B cell (primary cell): ENCODE measurements at regions of chr6 and their contacts with region 1.

Region 1: GRCh38 chr6:32952817-32953739 is at the start of gene HLA-DMA:
- DNase-seq: peak; percentile 97
- ATAC-seq: peak; percentile 91
- H3K4me3 ChIP-seq: peak within 1 kb of the TSS; percentile 72 to 98 (median 93)
- H3K4me3 Mint-ChIP-seq: peak within 1 kb of the TSS; percentile 96
- H3K27ac ChIP-seq: peak within 1 kb of the TSS; percentile 91 to 92
- H3K27ac Mint-ChIP-seq: peak within 1 kb of the TSS; percentile 98
- H3K4me1 ChIP-seq: peaks cover 70 to 84% of the 10 kb centered on the region in 2 donors
- H3K4me1 Mint-ChIP-seq: peaks cover 85% of the 10 kb centered on the region
- H3K27me3 ChIP-seq: no peaks in the 10 kb centered on the region
- H3K27me3 Mint-ChIP-seq: no peaks in the 10 kb centered on the region
- CTCF ChIP-seq: peak; percentile 88
- total RNA-seq, gene HLA-DMA: 554 and 558 TPM in 2 replicates

Region 2: GRCh38 chr6:32692019-32692418 is 261.1 kb before region 1 on chr6:
- CTCF ChIA-PET with region 1: no interaction called
- POLR2A ChIA-PET with region 1: no interaction called
- intact Hi-C with region 1: no loop called
- DNase-seq: peak; percentile 85
- ATAC-seq: peak; percentile 60
- H3K4me3 ChIP-seq: no peak overlapping the region
- H3K4me3 Mint-ChIP-seq: peak overlapping the region; percentile 53
- H3K27ac ChIP-seq: peak overlapping the region; percentile 68 to 95
- H3K27ac Mint-ChIP-seq: peak overlapping the region; percentile 85
- H3K4me1 ChIP-seq: peaks cover 27 to 28% of the 10 kb centered on the region in 2 donors
- H3K4me1 Mint-ChIP-seq: peaks cover 33% of the 10 kb centered on the region
- H3K27me3 ChIP-seq: no peaks in the 10 kb centered on the region
- H3K27me3 Mint-ChIP-seq: no peaks in the 10 kb centered on the region
- CTCF ChIP-seq: peak; percentile 42

Region 3: DNA sequence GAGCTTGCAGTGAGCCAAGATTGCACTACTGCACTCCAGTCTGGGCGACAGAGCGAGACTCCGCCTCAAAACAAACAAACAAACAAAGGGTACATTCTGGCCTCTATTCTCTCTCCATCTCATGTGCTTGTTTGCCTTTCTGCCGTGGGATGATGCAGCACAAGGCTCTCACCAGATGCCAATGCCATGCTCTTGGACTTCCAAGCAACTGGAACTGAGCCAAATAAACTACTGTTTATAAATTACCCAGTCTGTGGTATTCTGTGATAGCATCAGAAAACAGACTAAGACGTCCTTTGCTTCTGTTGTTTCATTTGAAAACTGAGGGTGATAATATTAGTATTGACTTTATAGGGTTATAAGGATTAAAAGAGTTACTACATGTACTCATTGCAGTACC is 11.7 kb after region 1 on chr6:
- CTCF ChIA-PET with region 1: interaction called, 822 read pairs
- POLR2A ChIA-PET with region 1: interaction called, 349 read pairs
- intact Hi-C with region 1: loop called (anchors 1 kb)
- DNase-seq: no peak
- ATAC-seq: no peak
- H3K4me3 ChIP-seq: no peak overlapping the region
- H3K4me3 Mint-ChIP-seq: no peak overlapping the region
- H3K27ac ChIP-seq: no peak overlapping the region
- H3K27ac Mint-ChIP-seq: peak overlapping the region; percentile 68
- H3K4me1 ChIP-seq: peaks cover 26 to 28% of the 10 kb centered on the region in 2 donors
- H3K4me1 Mint-ChIP-seq: peaks cover 50% of the 10 kb centered on the region
- H3K27me3 ChIP-seq: no peaks in the 10 kb centered on the region
- H3K27me3 Mint-ChIP-seq: no peaks in the 10 kb centered on the region
- CTCF ChIP-seq: no peak